ENCODE measurements at regions of chr16 and their contacts with region 1.

Region 1: GRCh38 chr16:55701442-55702319 is 45.9 kb downstream of the SLC6A2 start:
- H3K4me3 ChIP-seq: no peak overlapping the region
- H3K27ac ChIP-seq: no peak overlapping the region
- H3K4me1 ChIP-seq: no peaks in the 10 kb centered on the region
- CTCF ChIP-seq: peak; percentile 55

Region 2: DNA sequence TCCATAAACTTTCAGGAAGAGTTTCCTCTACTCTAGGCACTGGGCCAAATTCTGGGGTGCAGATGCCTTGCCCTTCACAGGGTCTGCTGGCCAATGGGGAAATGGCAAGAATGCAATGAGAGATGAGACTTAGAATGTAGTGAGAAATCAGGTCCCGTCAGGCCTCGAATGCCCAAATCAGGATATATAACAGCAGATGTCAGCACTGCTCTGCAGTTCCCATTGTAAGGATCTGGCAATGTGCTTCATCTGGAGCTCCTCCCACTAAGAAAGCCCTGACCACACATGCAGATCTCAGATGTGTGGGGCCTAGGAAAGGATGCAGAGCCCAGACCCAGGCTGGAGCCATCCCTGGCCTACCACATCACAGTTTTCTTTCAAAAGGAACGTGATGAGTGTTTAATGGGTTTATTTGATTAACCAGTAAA is 206.7 kb before region 1 on chr16:
- CTCF ChIA-PET with region 1: interaction called, 21 read pairs
- POLR2A ChIA-PET with region 1: no interaction called
- H3K4me3 ChIP-seq: no peak overlapping the region
- H3K27ac ChIP-seq: no peak overlapping the region
- H3K4me1 ChIP-seq: peaks cover 8% of the 10 kb centered on the region; the same call in 1 of the 2 replicates
- CTCF ChIP-seq: peak; percentile 61

Region 3: GRCh38 chr16:55502801-55503366 is 198.8 kb before region 1 on chr16:
- CTCF ChIA-PET with region 1: interaction called, 14 read pairs
- POLR2A ChIA-PET with region 1: no interaction called
- H3K4me3 ChIP-seq: no peak overlapping the region
- H3K27ac ChIP-seq: peak overlapping the region; percentile 19; the same call in 1 of the 2 replicates
- H3K4me1 ChIP-seq: peaks cover 15% of the 10 kb centered on the region
- CTCF ChIP-seq: no peak

Region 4: GRCh38 chr16:55622930-55623561 is 78.6 kb before region 1 on chr16:
- CTCF ChIA-PET with region 1: interaction called, 11 read pairs
- POLR2A ChIA-PET with region 1: no interaction called
- H3K4me3 ChIP-seq: no peak overlapping the region
- H3K27ac ChIP-seq: no peak overlapping the region
- H3K4me1 ChIP-seq: no peaks in the 10 kb centered on the region
- CTCF ChIP-seq: no peak

Region 5: DNA sequence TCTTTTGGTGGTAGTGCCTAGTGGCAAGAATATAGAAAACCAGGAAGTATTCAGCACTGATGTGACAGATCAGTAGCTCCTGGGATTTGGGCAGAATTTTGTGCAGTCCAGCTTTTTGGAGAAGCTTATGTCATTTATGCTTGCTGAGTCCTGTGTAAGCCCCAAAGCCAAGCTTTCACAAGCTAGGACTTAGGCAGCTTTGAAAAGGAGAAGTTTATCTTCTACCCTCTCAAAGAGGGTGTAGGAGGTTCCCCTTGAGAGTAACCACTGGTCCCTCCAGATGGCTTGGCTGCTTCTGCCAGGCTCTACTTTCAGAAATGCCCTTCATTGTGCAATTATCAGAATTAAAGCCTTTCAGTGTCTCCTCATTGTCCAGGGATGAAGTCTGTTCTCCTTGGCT is 52.4 kb after region 1 on chr16:
- CTCF ChIA-PET with region 1: no interaction called
- POLR2A ChIA-PET with region 1: no interaction called
- H3K4me3 ChIP-seq: no peak overlapping the region
- H3K27ac ChIP-seq: no peak overlapping the region
- H3K4me1 ChIP-seq: no peaks in the 10 kb centered on the region
- CTCF ChIP-seq: no peak

Measured in HEK293 (cell line).